PC-3 (cell line): ENCODE measurements at regions of chr7 and their contacts with region 1.

Region 1: DNA sequence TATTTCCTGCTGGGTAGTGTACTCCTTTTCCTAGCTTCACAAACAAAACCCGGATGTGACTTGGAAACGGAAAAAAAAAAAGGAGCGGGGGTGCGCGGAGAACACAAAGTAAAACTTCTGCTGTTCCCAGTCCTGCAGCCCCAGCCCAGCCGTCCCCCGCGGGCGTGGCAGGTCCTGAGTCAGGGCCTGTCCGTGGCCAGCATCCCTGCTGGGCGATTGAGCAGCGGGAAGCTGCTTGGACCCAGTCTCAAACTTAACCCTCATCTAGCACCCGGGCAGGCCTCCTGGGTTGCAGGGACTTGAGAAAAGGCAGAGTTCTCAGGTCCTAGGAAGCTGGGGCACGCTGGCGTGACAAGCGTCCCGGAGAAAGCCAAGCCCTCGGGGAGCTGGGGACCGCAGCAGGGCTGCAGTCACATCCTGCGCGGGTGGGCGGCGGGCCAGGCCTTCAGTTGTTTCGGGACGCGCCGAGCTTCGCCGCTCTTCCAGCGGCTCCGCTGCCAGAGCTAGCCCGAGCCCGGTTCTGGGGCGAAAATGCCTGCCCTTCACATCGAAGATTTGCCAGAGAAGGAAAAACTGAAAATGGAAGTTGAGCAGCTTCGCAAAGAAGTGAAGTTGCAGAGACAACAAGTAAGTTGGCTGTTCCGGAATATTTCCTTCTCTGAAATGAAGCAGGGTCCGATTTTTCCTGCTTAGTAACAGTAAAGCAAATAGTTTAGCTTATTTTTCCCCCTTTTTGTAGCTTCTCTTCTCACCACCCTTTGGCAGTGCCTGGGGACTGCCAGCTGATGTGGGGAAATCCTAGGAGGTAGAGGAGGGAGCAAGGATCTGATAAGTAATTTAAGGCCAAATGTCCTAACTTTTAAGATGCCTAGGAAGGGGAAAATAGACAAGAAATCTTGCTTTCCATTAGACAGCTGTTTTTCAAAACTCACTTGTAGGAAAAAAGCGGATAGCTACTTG is at the start of gene GNG11:
- DNase-seq: peak; percentile 65
- ATAC-seq: peak; percentile 87
- H3K4me3 ChIP-seq: peak within 1 kb of the TSS; percentile 73
- H3K27ac ChIP-seq: peak within 1 kb of the TSS; percentile 68
- H3K4me1 ChIP-seq: no peaks in the 10 kb centered on the region
- H3K27me3 ChIP-seq: no peaks in the 10 kb centered on the region
- CTCF ChIP-seq: no peak
- total RNA-seq, gene GNG11: 3.0 and 4.4 TPM in 2 replicates

Region 2: DNA sequence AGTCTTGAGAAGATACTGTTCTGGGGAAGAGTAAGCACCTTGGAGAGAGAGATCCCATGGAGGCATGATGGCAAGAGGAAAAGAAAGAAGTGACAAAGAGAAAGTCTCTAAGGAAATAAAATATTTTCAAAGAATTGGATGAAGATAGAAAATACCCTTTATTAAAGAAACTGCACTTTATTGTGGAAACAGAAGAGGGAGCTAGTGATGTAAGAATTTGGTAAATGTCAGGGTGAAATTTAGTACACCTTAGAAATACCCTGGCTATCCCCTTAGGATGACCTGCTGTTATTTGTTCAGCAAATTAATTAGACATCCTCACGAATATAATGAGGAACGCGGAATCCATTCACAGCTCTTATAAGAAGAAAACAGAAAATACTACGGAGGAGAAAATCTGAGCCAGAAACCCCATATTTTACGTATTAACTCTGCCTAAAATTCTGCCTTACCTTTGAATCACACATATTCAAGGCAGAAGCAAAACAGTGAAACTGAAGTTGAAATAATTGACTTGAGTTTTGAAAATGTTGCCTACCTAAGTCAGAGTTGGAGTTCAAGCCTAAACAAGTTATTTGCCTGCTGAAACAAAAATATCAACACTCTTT is 122.0 kb before region 1 on chr7:
- CTCF ChIA-PET with region 1: no interaction called
- POLR2A ChIA-PET with region 1: no interaction called
- intact Hi-C with region 1: no loop called
- DNase-seq: peak; percentile 51
- ATAC-seq: peak; percentile 38; the same call in 1 of the 2 replicates
- H3K4me3 ChIP-seq: no peak overlapping the region
- H3K27ac ChIP-seq: no peak overlapping the region
- H3K4me1 ChIP-seq: no peaks in the 10 kb centered on the region
- H3K27me3 ChIP-seq: peaks cover 12% of the 10 kb centered on the region; the same call in 1 of the 2 replicates
- CTCF ChIP-seq: peak; percentile 71

Region 3: DNA sequence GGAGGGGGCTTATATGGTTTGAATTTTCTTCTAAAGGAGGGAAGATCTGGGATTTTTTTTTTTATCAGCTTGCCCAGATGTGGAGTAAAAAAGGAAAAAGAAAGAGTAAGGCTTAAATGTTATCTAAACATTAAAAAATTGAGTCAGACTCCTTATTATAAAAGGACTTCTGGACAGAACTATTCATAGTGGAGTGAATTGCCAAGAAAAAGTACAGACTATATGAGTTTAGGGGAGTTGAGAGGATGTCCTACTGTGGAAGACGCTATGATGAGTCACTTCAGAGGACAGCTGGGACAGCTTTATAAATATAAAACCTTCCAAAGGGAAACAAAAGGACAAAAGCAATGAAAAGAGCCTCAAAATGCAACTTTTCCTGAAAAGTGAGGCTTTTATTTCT is 104.4 kb before region 1 on chr7:
- CTCF ChIA-PET with region 1: no interaction called
- POLR2A ChIA-PET with region 1: no interaction called
- intact Hi-C with region 1: no loop called
- DNase-seq: no peak
- ATAC-seq: no peak
- H3K4me3 ChIP-seq: no peak overlapping the region
- H3K27ac ChIP-seq: no peak overlapping the region
- H3K4me1 ChIP-seq: no peaks in the 10 kb centered on the region
- H3K27me3 ChIP-seq: peaks cover 31% of the 10 kb centered on the region
- CTCF ChIP-seq: no peak

Region 4: GRCh38 chr7:93873998-93874574 is 47.8 kb before region 1 on chr7:
- CTCF ChIA-PET with region 1: no interaction called
- POLR2A ChIA-PET with region 1: no interaction called
- intact Hi-C with region 1: no loop called
- DNase-seq: no peak
- ATAC-seq: no peak
- H3K4me3 ChIP-seq: no peak overlapping the region
- H3K27ac ChIP-seq: no peak overlapping the region
- H3K4me1 ChIP-seq: no peaks in the 10 kb centered on the region
- H3K27me3 ChIP-seq: no peaks in the 10 kb centered on the region
- CTCF ChIP-seq: no peak

Region 5: GRCh38 chr7:93955304-93955703 is 33.4 kb after region 1 on chr7:
- CTCF ChIA-PET with region 1: no interaction called
- POLR2A ChIA-PET with region 1: no interaction called
- intact Hi-C with region 1: loop called (anchors 5 kb)
- DNase-seq: no peak
- ATAC-seq: no peak
- H3K4me3 ChIP-seq: no peak overlapping the region
- H3K27ac ChIP-seq: no peak overlapping the region
- H3K4me1 ChIP-seq: peaks cover 13% of the 10 kb centered on the region
- H3K27me3 ChIP-seq: no peaks in the 10 kb centered on the region
- CTCF ChIP-seq: no peak

Region 6: DNA sequence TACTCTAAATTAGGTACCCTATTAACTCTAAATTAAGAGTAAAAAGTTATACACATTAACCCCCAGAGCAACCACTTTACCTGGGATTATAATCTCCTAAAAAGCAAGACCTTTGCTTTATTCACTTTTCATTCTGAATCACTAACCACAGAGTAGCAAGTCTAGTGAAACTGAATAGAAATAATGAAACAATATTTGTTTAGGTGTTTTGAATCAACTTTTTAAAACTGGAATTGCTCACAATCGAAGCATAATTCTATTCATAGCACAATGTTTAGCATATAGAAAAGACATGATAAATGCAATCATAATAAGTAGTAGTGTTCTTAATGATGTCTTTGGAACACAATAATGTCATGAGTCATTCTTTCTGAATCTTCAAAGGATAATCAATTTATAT is 550.7 kb after region 1 on chr7:
- CTCF ChIA-PET with region 1: no interaction called
- POLR2A ChIA-PET with region 1: no interaction called
- intact Hi-C with region 1: no loop called
- DNase-seq: no peak
- ATAC-seq: no peak
- H3K4me3 ChIP-seq: no peak overlapping the region
- H3K27ac ChIP-seq: no peak overlapping the region
- H3K4me1 ChIP-seq: no peaks in the 10 kb centered on the region
- H3K27me3 ChIP-seq: no peaks in the 10 kb centered on the region
- CTCF ChIP-seq: no peak